Breast epithelium (tissue), 4 donors: ENCODE measurements at regions of chr10 and their contacts with region 1.

Region 1: GRCh38 chr10:123194056-123194455 is 39.9 kb downstream of the BUB3 start:
- DNase-seq: no peak
- H3K4me3 ChIP-seq: no peak overlapping the region
- H3K27ac ChIP-seq: no peak overlapping the region
- H3K4me1 ChIP-seq: no peaks in the 10 kb centered on the region
- H3K27me3 ChIP-seq: no peaks in the 10 kb centered on the region
- CTCF ChIP-seq: no peak
- POLR2A ChIP-seq: no peak

Region 2: DNA sequence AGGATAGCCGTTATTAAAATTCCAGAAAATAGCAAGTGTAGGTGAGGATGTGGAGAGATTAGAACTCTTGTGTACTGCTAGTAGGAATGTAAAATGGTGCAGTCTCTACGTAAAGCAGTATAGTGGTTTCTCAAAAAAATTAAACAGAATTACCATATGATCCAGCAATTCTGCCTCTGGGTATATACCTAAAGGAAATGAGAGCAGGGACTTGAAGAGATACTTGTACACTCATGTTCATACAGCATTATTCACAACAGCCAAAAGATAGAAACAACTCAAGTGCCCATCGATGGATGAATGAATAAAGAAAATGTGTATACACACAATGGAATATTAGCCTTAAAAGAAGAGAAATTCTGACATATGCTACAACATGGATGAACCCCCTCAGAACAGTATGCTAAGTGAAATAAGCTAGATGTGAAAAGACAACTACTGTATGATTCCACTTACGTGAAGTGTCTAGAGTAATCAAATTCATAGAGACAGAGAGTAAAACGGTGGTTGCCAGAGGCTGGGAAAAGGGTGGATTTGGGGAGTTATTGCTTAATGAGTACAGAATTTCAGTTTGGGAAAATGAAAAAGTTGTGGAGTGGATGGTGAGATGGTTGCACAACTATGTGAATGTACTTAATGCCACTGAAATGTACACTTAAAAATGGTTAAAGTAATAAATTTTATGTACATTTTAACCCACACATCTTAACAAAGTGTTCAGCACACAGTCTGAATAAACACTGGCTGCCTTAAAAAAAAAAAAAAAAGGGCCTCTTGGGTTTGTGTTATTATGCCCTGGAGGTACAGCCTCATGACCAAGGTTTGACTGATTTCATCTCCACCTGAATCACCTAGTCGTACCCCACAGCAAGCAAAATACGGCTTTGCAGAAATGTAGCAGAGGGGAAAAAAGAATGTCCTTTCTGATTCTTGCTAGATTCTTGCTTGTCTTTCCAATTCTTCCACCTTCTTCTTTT is 13.7 kb before region 1 on chr10:
- intact Hi-C with region 1: no loop called
- DNase-seq: no peak
- H3K4me3 ChIP-seq: no peak overlapping the region
- H3K27ac ChIP-seq: no peak overlapping the region
- H3K4me1 ChIP-seq: no peaks in the 10 kb centered on the region
- H3K27me3 ChIP-seq: no peaks in the 10 kb centered on the region
- CTCF ChIP-seq: no peak
- POLR2A ChIP-seq: no peak

Region 3: DNA sequence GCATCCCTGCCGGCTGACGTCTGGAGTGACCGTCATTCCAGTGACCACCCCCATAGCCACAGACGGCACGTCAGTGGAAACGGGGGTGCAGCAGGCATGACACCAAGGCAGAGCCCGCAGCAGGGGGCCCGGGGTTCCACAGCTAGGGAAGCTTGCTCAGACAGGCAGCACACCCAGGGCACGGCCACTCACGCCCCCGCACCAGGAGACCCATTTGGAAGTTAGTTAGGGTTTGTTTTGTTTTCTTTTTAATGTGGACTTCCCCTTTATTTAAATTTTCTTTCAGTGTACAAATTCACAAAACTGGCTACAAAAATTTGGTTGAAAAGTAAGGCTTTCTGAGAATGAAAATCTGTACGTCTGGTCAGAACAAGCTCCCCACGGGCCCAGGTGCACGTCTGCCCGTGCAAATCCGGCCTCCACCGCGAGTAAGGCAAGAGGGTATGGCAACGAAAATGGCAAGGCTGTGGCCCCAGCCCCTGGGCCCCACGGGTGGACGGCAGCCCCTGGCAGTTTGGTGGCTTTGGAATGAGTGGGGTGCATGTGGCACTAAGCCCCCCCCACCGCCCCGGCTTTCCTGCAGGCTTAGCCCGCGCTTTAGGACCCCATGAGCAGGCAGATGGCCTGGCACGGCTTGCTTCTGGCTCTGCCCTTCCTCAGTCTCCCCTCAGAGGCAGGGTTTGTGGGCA is 1425.9 kb after region 1 on chr10:
- intact Hi-C with region 1: loop called (anchors 5 kb)
- DNase-seq: no peak
- H3K4me3 ChIP-seq: no peak overlapping the region
- H3K27ac ChIP-seq: no peak overlapping the region
- H3K4me1 ChIP-seq: peaks cover 0 to 15% of the 10 kb centered on the region in 2 donors
- H3K27me3 ChIP-seq: no peaks in the 10 kb centered on the region
- CTCF ChIP-seq: no peak
- POLR2A ChIP-seq: no peak